Thyroid gland (tissue), 4 donors: ENCODE measurements at regions of chr1 and their contacts with region 1.

Region 1: DNA sequence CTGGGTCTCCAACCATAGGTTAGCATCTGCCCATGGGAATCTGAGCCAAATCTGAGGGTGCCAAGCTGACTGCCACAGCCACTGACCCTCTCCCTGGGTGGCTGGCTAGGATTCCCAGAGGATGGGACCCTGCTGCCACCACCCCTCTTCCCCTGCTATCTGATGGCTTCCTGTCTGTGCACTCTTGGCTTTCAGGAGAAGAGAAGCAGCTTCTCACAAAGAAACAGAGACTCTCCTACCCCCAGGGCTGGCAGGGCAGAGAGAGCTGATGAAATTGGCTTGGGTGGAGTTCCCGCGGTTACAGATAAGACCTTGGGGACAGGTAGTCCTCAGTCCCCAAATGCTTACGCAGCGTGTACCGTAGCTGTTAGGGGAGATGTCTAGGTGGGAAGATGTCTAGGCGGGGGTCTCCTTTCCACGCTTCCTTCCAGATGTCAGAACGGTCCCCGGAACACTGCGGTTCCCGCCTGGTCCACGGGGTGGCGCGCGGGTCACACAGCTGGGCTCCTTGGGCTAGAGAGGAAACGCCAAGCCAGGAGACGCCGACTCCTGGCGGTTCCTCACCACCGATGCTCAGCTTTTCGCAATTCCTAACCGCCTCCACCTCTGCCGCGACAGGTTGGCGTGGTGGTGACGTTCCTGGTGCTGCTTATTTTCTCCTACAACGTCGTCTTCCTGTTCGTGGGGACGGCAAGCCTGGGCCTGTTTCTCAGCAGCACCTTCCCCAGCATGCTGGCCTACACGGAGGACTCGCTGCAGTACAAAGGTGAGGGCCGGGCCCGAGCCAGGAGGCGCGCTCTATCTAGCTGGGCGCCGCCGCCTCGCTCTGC is 40.1 kb downstream of the ELK4 start:
- DNase-seq: peak; percentile 85 to 87
- H3K4me3 ChIP-seq: peak overlapping the region in 1 of 3 donors; percentile 24
- H3K27ac ChIP-seq: no peak overlapping the region
- H3K4me1 ChIP-seq: no peaks in the 10 kb centered on the region
- H3K27me3 ChIP-seq: no peaks in the 10 kb centered on the region
- CTCF ChIP-seq: peak; percentile 92 to 99 (median 98)
- POLR2A ChIP-seq: no peak

Region 2: GRCh38 chr1:205248793-205249601 is 342.7 kb before region 1 on chr1:
- intact Hi-C with region 1: no loop called
- DNase-seq: peak; percentile 94 to 96
- H3K4me3 ChIP-seq: no peak overlapping the region
- H3K27ac ChIP-seq: peak overlapping the region; percentile 61 to 74 (median 71)
- H3K4me1 ChIP-seq: peaks cover 20 to 29% of the 10 kb centered on the region in 2 donors
- H3K27me3 ChIP-seq: no peaks in the 10 kb centered on the region
- CTCF ChIP-seq: no peak
- POLR2A ChIP-seq: no peak

Region 3: DNA sequence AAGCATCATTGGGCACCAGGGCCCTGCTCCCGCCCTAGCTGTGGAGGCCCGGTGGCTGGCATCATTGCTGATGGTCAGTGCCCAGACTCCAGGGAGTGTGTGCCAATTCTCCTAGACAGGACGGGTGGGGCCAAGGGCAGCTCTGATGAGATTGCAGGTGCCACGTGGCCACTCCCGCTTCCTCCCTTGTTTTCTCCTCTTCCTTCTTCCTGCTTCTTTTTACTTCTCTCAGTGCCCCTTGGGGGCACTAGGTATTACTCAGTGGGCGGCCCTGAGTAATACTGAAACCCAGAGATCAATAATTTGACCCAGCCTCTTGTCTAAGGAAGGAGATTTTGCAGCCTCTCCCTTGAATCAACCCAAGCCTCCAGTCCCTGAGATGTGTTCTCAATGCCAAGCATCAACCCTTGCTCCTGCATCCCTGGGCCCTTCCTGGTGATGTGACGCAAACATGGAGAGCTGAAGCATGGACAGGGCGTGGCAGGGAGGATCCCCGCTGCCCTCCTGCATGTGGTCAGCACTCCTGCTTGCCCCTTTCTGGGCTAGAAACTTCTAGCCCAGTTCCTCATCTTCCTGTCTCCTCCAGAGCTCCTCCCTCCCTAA is 54.9 kb before region 1 on chr1:
- intact Hi-C with region 1: loop called (anchors 5 kb)
- DNase-seq: no peak
- H3K4me3 ChIP-seq: no peak overlapping the region
- H3K27ac ChIP-seq: no peak overlapping the region
- H3K4me1 ChIP-seq: no peaks in the 10 kb centered on the region
- H3K27me3 ChIP-seq: no peaks in the 10 kb centered on the region
- CTCF ChIP-seq: no peak
- POLR2A ChIP-seq: no peak

Region 4: DNA sequence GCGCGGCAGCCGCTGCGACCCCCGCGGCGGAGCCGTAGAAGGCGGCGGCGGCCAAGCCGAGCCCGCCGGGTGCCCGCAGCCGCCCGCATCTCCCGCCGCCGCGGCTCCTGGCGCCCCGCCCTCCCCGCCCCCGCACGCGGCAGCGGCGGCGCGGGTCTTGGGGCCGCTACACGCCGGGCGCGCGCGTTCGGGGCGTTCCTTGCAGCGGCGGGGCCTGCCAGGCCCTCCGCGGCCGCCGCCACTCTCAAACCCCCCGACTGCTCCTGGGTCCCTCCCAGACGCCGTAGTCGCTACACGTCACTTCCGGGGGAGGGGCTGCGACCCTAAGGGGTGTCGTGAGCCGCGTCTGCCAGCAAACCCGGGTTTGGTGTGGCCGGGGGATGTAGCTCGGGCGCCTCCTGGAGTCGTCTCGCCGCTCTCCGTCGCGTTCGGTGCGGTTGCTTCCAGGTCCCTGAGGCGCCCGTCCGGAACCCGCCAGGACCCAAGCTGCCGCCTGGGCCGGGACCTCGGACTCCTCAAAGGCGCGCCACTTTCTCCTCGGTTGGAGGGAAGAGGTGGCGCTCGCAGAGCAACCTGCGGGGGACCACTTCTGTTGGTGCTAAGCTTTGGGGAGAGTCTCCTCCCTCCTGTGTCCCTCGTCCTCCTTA is 40.1 kb after region 1 on chr1 and contains the start of gene ELK4:
- intact Hi-C with region 1: loop called (anchors 5 kb)
- DNase-seq: peak; percentile 98 to 99
- H3K4me3 ChIP-seq: peak within 1 kb of the TSS in 2 of 3 donors; percentile 42 to 78
- H3K27ac ChIP-seq: peak within 1 kb of the TSS; percentile 88 to 96 (median 94)
- H3K4me1 ChIP-seq: peaks cover 19 to 20% of the 10 kb centered on the region in 2 donors
- H3K27me3 ChIP-seq: no peaks in the 10 kb centered on the region
- CTCF ChIP-seq: peak; percentile 28 to 85 (median 65)
- POLR2A ChIP-seq: peak; percentile 58 to 94
- total RNA-seq, gene ELK4: 18.0 to 33.9 (median 28.4) TPM

Region 5: DNA sequence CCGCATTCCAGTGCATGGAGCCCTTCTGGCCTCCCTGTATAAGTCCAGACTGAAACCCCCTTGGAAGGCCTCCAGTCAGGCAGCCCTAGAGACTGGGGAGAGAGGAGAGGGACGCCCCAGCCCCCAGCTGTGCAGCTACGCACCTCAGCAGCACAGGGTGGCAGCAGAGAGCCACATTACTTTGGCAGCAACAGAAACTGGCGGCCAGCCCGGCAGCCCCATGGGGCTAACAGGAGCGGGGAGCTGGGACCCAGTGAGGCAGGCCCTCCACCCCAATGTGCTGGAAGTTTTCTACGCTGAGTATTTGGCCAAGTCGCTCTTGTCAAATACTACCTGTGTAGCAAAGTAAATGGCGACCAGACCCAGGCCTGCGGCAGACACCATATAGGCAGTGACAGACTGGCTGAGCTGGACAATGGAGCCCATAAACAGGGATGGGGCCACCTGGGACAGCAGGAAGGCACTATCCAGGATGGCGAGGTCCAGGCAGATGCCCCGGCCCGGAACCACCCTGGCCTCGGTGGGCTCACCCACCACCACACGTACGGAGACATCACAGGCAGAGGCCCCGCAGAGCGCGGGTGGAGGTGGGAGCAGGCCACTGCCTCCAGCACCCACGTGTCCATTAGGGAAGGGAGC is 67.3 kb after region 1 on chr1:
- intact Hi-C with region 1: loop called (anchors 2 kb)
- DNase-seq: peak; percentile 83 to 87
- H3K4me3 ChIP-seq: no peak overlapping the region
- H3K27ac ChIP-seq: no peak overlapping the region
- H3K4me1 ChIP-seq: peaks cover 4 to 6% of the 10 kb centered on the region in 2 donors
- H3K27me3 ChIP-seq: no peaks in the 10 kb centered on the region
- CTCF ChIP-seq: peak; percentile 47 to 96 (median 88)
- POLR2A ChIP-seq: no peak